ENCODE measurements at regions of chr22 and their contacts with region 1.

Region 1: GRCh38 chr22:30005213-30005857 is 74.9 kb upstream of the HORMAD2 start:
- DNase-seq: no peak
- H3K4me3 ChIP-seq: no peak overlapping the region
- H3K27ac ChIP-seq: no peak overlapping the region
- H3K4me1 ChIP-seq: peaks cover 3% of the 10 kb centered on the region
- H3K27me3 ChIP-seq: no peaks in the 10 kb centered on the region
- CTCF ChIP-seq: peak; percentile 64 to 86 (median 85)
- POLR2A ChIP-seq: no peak

Region 2: GRCh38 chr22:29727131-29727523 is 278.2 kb before region 1 on chr22:
- intact Hi-C with region 1: loop called (anchors 10 kb)
- DNase-seq: no peak
- H3K4me3 ChIP-seq: no peak overlapping the region
- H3K27ac ChIP-seq: no peak overlapping the region
- H3K4me1 ChIP-seq: no peaks in the 10 kb centered on the region
- H3K27me3 ChIP-seq: no peaks in the 10 kb centered on the region
- CTCF ChIP-seq: no peak
- POLR2A ChIP-seq: no peak

Region 3: DNA sequence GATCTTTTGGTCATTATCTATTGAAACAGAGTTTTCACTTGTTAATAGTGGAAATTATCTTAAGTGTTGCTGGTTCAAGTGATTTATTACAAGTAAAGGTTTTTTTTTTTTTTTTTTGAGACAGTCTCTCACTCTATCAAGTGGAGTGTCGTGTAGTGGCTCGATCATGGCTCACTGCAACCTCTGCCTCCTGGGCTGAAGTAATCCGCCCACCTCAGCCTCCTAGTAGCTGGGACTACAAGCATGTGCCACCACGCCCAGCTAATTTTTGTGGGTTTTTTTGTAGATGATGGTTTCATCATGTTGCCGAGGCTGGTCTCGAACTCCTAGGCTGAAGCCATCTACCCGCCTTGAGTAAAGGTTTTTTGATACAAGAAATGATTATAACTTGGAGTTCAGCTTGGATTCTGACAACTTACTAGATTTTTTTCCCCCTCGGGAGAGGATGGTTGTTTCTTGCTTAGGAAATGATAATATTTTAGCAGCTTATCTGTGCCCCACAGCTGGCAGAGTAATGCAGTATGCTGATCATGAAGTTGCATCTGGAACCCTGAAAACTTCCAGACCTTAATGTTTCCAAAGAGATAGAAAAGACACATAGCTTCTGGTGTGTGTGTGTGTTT is 53.4 kb before region 1 on chr22:
- intact Hi-C with region 1: no loop called
- DNase-seq: no peak
- H3K4me3 ChIP-seq: no peak overlapping the region
- H3K27ac ChIP-seq: no peak overlapping the region
- H3K4me1 ChIP-seq: peaks cover 28% of the 10 kb centered on the region
- H3K27me3 ChIP-seq: no peaks in the 10 kb centered on the region
- CTCF ChIP-seq: no peak
- POLR2A ChIP-seq: no peak